Activated T-helper 1 cell treated with anti-CD3 and anti-CD28 coated beads, Interleukin-12 subunit alpha, Interleukin-12 subunit beta, Interleukin-2, Interleukin-4 antibody, amounts not matched to agents 30 ng/mL and 10 ng/mL and 1 ng/mL, durations not matched to agents 14 hours and 24 hours and 36 hours (primary cell): ENCODE measurements at regions of chr4 and their contacts with region 1.

Region 1: GRCh38 chr4:2041234-2042130 is 17.6 kb upstream of the NAT8L start:
- DNase-seq: peak; percentile 87
- H3K4me3 Mint-ChIP-seq: peak overlapping the region; percentile 84
- H3K27ac Mint-ChIP-seq: no peak overlapping the region
- H3K4me1 Mint-ChIP-seq: peaks cover 7% of the 10 kb centered on the region
- H3K27me3 Mint-ChIP-seq: peaks cover 31% of the 10 kb centered on the region

Region 2: DNA sequence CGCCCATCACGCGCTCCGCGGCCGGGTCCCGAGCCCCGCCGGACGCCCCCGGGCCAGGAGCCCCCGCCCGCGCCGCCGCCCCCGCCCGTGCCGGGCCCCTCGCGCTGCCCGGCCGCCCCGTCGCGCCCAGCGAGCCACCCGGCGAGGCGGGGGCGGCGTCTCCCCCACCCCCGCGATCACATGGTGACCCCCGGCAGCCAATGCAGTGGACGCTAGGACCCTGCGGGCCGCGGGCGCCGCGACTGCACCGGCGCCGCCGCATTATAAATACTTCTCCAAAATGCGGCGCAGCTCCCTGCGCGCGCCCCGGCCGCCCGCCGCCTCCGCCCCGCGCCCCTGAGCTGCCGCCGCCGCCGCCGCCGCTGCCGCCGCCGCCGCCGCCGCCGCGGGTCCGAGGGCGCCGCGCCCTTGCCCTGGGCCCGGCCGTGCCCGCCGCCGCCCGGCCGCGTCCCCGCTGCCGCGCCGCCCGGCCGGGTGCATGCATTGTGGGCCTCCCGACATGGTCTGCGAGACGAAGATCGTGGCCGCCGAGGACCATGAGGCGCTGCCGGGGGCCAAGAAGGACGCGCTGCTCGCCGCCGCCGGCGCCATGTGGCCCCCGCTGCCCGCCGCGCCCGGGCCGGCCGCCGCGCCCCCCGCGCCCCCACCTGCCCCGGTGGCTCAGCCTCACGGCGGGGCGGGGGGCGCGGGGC is 17.7 kb after region 1 on chr4 and contains the start of gene NAT8L:
- intact Hi-C with region 1: loop called (anchors 2 kb)
- DNase-seq: no peak
- H3K4me3 Mint-ChIP-seq: peak within 1 kb of the TSS; percentile 37
- H3K27ac Mint-ChIP-seq: no peak within 1 kb of the TSS
- H3K4me1 Mint-ChIP-seq: no peaks in the 10 kb centered on the region
- H3K27me3 Mint-ChIP-seq: peaks cover 39% of the 10 kb centered on the region
- total RNA-seq, gene NAT8L: 7.4 and 8.0 TPM in 2 replicates

Region 3: GRCh38 chr4:2172161-2172560 is 130.7 kb after region 1 on chr4:
- intact Hi-C with region 1: loop called (anchors 5 kb)
- DNase-seq: peak; percentile 58
- H3K4me3 Mint-ChIP-seq: peak overlapping the region; percentile 61
- H3K27ac Mint-ChIP-seq: peak overlapping the region; percentile 86
- H3K4me1 Mint-ChIP-seq: peaks cover 80% of the 10 kb centered on the region
- H3K27me3 Mint-ChIP-seq: no peaks in the 10 kb centered on the region

Region 4: DNA sequence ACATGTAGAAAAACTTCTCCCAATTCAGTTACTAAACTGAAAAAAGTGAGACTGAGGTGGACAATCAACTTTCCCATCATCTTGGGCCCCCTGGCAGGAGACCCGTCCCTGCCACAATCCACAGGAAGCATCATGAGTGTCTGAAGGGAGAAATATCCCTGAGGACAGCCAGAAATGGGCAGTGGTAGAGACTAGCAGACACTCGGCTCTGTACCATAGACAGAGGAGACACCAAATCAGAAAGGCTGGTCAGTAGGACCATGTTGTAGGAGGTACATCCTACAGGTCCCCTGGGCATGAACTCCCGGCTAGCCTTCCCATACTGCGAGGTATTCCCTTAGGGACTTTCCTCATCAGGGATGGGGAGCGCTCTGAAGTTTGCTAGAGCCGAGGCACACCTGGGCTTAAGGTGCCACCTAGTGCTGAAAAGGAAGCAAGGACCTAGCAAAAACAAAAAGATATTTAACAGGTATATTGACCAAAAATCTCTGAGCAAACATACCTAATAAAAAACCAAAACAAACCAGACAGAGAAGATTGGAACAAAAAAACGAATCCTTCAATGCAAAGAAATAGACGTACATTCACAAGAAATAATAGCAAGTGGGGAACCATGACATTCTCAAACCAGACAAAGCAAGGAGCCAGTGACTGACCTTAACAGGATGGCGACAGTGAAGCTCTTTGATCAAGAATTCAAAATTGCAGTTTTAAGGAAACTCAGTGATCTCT is 144.8 kb after region 1 on chr4:
- intact Hi-C with region 1: loop called (anchors 5 kb)
- DNase-seq: no peak
- H3K4me3 Mint-ChIP-seq: no peak overlapping the region
- H3K27ac Mint-ChIP-seq: no peak overlapping the region
- H3K4me1 Mint-ChIP-seq: peaks cover 22% of the 10 kb centered on the region
- H3K27me3 Mint-ChIP-seq: no peaks in the 10 kb centered on the region